Prostate gland (tissue), 2 donors: ENCODE measurements at regions of chr10 and their contacts with region 1.

Region 1: DNA sequence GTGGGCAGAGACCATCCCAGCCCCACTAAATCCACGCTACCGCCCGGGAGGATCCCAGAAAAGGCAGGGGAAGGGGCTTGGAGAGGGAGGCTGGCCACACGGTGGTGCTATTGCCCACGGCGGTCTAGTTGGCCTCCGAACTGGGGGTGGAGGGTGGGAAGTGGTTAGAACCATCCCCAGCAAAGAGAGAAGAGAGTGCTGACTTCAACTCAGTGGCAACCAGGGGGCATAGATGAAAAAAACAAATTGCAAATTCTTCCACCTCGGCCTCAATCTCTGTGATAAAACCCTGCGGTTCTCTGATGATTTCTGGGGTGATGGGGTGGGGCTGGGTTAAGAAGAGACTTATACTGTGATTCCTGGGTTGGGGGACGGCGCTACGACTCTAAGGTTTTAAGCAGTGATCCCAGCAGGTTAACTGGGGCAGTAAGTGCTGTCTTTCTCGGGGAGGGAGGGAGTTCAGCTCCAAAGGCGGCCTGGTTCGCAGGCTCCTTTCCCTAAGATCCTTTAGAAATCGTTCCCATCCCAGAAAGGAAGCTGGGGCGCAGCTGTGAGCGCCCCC is 154.5 kb upstream of the LYZL2 start:
- DNase-seq: peak; percentile 67
- H3K4me3 ChIP-seq: peak overlapping the region; percentile 51 to 53
- H3K27ac ChIP-seq: peak overlapping the region; percentile 83 to 84
- H3K4me1 ChIP-seq: no peaks in the 10 kb centered on the region
- H3K27me3 ChIP-seq: no peaks in the 10 kb centered on the region
- CTCF ChIP-seq: peak; percentile 80 to 85 (median 84)
- POLR2A ChIP-seq: no peak

Region 2: DNA sequence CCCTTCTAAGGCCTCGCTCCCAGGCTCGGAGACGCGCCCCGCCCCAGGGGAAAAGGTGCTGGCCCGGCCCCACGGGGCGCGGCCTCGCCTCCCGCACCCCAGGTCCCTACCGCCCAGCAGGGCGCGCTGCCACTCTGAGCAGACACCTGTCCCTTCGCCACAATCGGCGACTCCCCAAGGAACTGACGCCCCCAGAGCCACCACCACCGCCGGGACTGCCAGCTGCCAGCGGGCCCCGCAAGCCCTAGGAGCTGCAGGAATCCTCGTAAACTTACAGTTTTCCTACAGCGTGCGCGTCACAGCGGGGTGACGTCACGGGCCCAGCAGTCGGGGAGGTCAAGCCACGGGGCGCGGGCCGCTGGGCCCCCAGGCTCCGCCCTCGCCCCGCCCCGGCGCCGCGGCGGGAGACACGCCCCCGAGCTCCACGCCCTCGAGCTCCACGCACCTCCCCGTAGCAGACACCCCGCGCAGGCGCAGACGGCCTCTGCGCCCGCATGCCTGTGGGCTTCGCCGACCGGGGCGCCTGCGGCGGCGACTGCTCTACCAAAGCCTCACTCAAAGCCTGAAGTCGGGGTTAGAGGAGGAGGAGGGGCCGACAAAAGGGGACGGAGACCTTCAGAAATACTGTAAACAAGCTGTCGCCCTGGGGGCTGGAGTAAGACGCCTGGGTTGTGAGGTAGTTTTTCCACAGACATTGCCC is 247.7 kb after region 1 on chr10 and contains the start of gene ZNF438:
- intact Hi-C with region 1: loop called (anchors 2 kb)
- DNase-seq: peak; percentile 89
- H3K4me3 ChIP-seq: peak within 1 kb of the TSS; percentile 57 to 62
- H3K27ac ChIP-seq: peak within 1 kb of the TSS; percentile 97
- H3K4me1 ChIP-seq: no peaks in the 10 kb centered on the region
- H3K27me3 ChIP-seq: no peaks in the 10 kb centered on the region
- CTCF ChIP-seq: peak; percentile 31 to 80 (median 68)
- POLR2A ChIP-seq: peak; percentile 73
- total RNA-seq, gene ZNF438: 1.5 to 10.1 TPM

Region 3: DNA sequence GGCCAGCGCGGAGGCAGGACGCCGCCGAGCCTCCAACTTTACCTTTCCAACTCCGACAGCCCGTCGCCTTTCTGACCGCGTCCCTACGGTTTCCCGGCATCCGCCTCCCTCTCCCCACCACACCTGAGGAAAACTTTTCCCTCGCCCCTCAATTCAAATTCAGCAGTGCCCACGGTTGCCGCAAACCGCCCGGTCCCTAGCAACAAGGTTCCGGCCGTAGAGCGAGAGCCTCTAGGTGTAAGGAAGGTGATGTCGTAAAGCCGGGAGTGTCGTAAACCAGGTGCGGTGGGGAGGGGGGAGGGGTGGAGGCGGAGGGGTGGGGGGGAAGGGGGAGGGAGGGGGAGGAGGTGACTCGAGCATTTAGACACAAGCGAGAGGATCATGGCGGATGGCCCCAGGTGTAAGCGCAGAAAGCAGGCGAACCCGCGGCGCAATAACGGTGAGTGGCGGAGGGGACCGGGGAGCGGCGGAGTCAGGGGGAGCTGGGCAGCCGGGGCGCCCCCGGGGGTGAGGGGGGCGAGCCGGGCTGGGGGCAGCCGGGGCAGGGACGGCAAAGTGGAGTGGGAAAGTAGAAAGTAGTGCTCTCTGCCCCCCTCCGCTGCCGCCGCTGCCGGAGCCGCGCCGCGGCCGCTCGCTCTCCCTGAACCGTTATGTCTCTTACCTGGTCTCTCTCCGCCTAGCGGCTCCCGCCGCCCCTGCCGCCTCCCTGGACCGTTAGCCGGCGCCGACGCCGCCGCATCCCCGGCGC is 535.0 kb after region 1 on chr10 and contains the start of gene ZEB1:
- intact Hi-C with region 1: loop called (anchors 1 kb)
- DNase-seq: peak; percentile 90
- H3K4me3 ChIP-seq: peak within 1 kb of the TSS; percentile 60 to 81
- H3K27ac ChIP-seq: peak within 1 kb of the TSS; percentile 85 to 88
- H3K4me1 ChIP-seq: no peaks in the 10 kb centered on the region
- H3K27me3 ChIP-seq: no peaks in the 10 kb centered on the region
- CTCF ChIP-seq: peak in 2 of 4 experiments; percentile 51 to 69
- POLR2A ChIP-seq: no peak
- total RNA-seq, gene ZEB1: 15.0 to 28.2 TPM

Region 4: DNA sequence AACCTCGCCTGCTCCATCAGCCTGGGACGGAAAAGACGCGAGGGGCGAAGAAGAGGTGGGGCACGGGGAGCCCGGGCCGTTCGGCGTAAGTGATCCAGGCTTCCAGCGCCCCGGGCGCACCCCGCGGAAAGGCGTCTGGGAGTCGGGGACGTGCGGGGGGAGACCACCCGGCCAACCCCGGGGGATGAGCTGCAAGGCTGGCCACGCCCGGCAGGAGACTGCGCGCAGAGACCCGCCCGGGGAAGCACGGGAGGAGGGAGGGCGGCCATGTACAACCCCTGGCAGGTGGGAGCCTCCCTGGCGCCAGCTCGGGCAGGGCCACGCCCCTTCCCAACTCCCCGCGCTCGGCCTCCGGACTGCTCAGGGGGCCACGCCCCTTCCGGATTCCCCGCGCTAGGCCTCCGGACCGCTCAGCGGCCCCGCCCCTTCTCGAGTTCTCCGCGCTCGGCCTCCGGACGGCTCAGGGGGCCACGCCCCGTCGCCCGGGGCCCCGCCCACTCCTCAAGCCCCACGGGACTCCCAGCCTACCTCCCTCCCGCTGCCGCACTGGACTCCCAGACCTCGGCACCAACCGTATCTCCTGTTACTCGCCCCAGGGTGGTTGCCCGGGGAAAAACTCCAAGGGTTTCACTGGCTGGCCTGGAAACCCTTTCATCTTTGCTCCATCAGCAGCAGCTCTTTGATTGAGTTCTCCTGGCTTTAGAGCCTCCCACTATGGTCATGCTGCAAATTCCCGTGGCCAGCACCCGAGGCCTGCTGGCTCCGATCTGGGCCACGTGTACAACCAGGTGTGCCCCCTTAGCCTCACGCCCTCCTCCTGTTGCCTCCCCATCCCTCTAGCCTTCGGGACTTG is 819.4 kb after region 1 on chr10:
- intact Hi-C with region 1: loop called (anchors 10 kb)
- DNase-seq: peak; percentile 95
- H3K4me3 ChIP-seq: peak overlapping the region; percentile 58 to 60
- H3K27ac ChIP-seq: peak overlapping the region; percentile 79 to 84
- H3K4me1 ChIP-seq: no peaks in the 10 kb centered on the region
- H3K27me3 ChIP-seq: no peaks in the 10 kb centered on the region
- CTCF ChIP-seq: peak in 2 of 4 experiments; percentile 26 to 39
- POLR2A ChIP-seq: peak; percentile 60

Region 5: DNA sequence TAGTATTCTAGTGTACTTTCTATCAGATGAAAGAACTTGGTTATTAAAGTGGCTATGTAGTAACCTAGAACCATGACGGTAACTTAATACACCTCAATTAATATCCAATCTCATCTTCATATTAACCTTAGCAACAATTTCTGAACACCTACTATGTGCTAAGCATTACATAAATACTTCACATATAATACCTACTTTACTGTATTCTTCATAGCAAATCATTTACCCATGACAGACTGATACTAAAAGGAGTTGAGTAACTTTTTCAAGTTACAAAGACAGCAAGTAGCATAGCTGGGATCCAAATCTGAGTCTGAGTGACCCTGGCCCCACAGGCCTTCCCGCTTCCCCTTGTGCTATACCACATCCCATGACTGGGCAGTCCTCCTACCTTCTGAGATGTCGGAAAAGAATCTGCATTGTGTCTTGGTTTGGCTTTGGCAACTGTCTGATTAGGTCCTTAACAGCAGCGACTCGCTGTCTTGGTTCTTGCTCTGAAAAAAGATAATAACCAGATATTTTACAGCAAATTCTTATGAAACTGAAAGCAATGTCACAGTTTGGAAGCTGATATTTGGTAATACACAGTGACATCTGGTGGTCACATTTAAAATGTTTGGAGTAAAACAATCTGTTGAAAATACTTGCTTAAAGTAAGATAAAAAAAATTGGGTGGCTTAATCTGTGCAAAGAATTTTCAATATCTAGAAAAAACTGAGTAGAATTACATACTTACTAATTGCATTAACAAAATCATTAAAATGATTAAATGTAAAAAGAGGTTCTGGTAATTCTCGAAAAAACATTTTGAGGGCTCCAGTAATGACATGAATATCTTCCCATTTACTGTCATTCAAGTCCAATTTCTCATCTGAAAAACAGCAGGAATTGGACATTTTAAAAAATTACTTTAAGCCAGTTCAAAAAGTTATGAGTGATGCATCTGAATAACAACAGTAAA is 1024.5 kb after region 1 on chr10:
- intact Hi-C with region 1: loop called (anchors 2 kb)
- DNase-seq: no peak
- H3K4me3 ChIP-seq: no peak overlapping the region
- H3K27ac ChIP-seq: peak overlapping the region; percentile 19 to 47
- H3K4me1 ChIP-seq: no peaks in the 10 kb centered on the region
- H3K27me3 ChIP-seq: no peaks in the 10 kb centered on the region
- CTCF ChIP-seq: peak; percentile 18 to 74 (median 62)
- POLR2A ChIP-seq: no peak